Activated T-helper 2 cell treated with anti-CD3 and anti-CD28 coated beads, Interferon-gamma antibody, Interleukin-2, Interleukin-4, amounts not matched to agents 10 μg/mL and 5 μg/mL and 100 μg/mL, durations not matched to agents 14 hours and 24 hours and 36 hours (primary cell): ENCODE measurements at regions of chr6 and their contacts with region 1.

Region 1: GRCh38 chr6:27902335-27903314 is 9.6 kb downstream of the OR2B2 start:
- DNase-seq: peak; percentile 78
- H3K4me3 Mint-ChIP-seq: peak overlapping the region; percentile 82
- H3K27ac Mint-ChIP-seq: peak overlapping the region; percentile 90
- H3K4me1 Mint-ChIP-seq: peaks cover 22% of the 10 kb centered on the region
- H3K27me3 Mint-ChIP-seq: peaks cover 13% of the 10 kb centered on the region

Region 2: DNA sequence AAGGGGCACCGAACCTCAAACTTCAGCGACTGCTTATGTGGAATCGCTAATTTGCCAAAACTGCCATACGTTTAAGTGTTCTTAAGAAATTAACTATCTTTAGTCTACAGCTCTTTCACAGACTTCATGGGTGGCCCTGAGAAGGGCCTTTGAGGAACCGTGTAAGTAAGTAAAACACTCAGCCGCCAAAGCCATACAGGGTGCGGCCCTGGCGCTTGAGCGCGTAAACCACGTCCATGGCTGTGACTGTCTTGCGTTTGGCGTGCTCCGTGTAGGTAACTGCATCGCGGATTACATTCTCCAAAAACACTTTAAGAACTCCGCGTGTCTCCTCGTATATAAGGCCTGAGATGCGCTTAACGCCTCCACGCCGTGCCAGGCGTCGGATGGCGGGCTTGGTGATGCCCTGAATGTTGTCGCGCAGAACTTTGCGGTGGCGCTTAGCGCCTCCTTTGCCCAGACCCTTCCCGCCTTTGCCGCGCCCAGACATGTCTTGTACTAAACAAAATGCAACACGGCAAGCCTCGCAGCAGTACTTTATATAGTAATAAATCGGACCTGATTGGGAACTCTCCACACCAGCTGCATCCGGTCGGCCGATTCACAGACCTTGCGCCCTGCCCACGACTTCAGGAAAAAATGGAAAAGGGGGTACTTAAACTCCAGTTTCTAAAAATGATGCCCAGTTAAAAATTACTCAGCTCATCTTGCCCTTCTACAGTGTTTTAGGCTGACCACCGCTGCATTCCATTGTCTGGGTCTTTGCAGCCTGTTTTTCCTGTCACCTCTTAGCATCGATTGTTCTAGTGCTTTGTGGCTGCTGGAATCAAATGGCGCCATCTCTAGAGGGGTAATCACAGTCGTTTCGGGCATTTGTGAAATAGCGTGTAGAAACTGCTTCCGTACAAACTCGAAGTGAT is 29.3 kb before region 1 on chr6:
- intact Hi-C with region 1: no loop called
- DNase-seq: peak; percentile 85
- H3K4me3 Mint-ChIP-seq: peak overlapping the region; percentile 89
- H3K27ac Mint-ChIP-seq: peak overlapping the region; percentile 97
- H3K4me1 Mint-ChIP-seq: peaks cover 40% of the 10 kb centered on the region
- H3K27me3 Mint-ChIP-seq: no peaks in the 10 kb centered on the region

Region 3: GRCh38 chr6:28355743-28356665 is 453.4 kb after region 1 on chr6:
- intact Hi-C with region 1: loop called (anchors 5 kb)
- DNase-seq: peak; percentile 41
- H3K4me3 Mint-ChIP-seq: peak overlapping the region; percentile 86
- H3K27ac Mint-ChIP-seq: peak overlapping the region; percentile 72
- H3K4me1 Mint-ChIP-seq: peaks cover 17% of the 10 kb centered on the region
- H3K27me3 Mint-ChIP-seq: no peaks in the 10 kb centered on the region